IMR-90 (cell line): ENCODE measurements at regions of chr5 and their contacts with region 1.

Region 1: DNA sequence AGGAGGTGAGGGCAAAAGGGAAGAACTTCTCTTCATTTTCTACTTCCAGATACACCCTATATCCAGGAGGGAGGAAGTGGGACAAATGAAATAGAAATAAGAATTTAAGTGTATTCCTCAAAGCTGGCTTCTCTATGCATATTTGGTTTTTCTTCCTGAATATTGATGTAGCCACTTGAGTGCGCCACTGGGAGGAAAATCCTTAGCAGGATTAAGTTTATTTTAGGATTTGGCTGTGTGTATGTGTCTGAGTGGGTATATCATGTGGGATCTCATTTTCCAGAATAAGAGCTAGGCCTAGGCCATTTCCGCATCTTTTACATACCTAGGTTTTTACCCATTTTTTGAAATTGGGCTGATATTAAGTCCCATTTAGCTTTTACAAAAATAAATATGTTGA is 42.5 kb downstream of the MAP1B start:
- DNase-seq: no peak
- ATAC-seq: no peak; the same call in 1 of the 2 replicates
- H3K4me3 ChIP-seq: no peak overlapping the region
- H3K27ac ChIP-seq: no peak overlapping the region
- H3K4me1 ChIP-seq: peaks cover 29% of the 10 kb centered on the region
- H3K27me3 ChIP-seq: no peaks in the 10 kb centered on the region
- CTCF ChIP-seq: peak; percentile 29; the same call in 1 of the 2 replicates
- POLR2A ChIP-seq: no peak
- RAD21 ChIP-seq: peak; percentile 33; the same call in 1 of the 2 replicates

Region 2: DNA sequence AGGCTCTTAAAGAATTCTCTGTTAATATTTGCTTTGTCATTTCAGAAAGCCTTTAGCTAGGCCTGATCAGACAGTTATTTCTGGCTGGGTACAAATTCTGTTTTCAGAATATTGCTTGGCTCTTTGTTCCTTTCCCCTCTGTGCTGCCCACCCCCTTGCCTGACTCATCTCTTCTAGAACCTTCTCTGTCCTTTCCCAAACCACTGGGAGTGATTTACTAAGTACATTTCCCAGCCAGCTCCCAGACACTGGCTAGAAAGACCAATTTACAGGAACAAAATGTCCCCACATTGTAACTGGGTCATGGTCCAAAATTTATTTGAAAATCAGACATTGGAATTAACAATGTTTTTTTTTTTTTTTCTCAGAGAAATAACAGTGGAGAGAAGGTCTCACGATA is 175.6 kb before region 1 on chr5:
- CTCF ChIA-PET with region 1: no interaction called
- POLR2A ChIA-PET with region 1: no interaction called
- dilution Hi-C with region 1: no loop called
- in situ Hi-C with region 1: no loop called
- intact Hi-C with region 1: no loop called
- DNase-seq: no peak
- ATAC-seq: no peak
- H3K4me3 ChIP-seq: no peak overlapping the region
- H3K27ac ChIP-seq: no peak overlapping the region
- H3K4me1 ChIP-seq: no peaks in the 10 kb centered on the region
- H3K27me3 ChIP-seq: peaks cover 26% of the 10 kb centered on the region
- CTCF ChIP-seq: no peak
- POLR2A ChIP-seq: no peak
- RAD21 ChIP-seq: no peak

Region 3: GRCh38 chr5:72228960-72229359 is 79.2 kb after region 1 on chr5:
- CTCF ChIA-PET with region 1: no interaction called
- POLR2A ChIA-PET with region 1: no interaction called
- dilution Hi-C with region 1: no loop called
- in situ Hi-C with region 1: no loop called
- intact Hi-C with region 1: no loop called
- DNase-seq: no peak
- ATAC-seq: no peak
- H3K4me3 ChIP-seq: no peak overlapping the region
- H3K27ac ChIP-seq: no peak overlapping the region
- H3K4me1 ChIP-seq: peaks cover 4% of the 10 kb centered on the region
- H3K27me3 ChIP-seq: no peaks in the 10 kb centered on the region
- CTCF ChIP-seq: no peak
- POLR2A ChIP-seq: no peak
- RAD21 ChIP-seq: no peak

Region 4: GRCh38 chr5:72244862-72245371 is 95.2 kb after region 1 on chr5:
- CTCF ChIA-PET with region 1: interaction called, 3 read pairs
- POLR2A ChIA-PET with region 1: no interaction called
- dilution Hi-C with region 1: no loop called
- in situ Hi-C with region 1: no loop called
- intact Hi-C with region 1: loop called (anchors 5 kb)
- DNase-seq: peak; percentile 61
- ATAC-seq: peak; percentile 77
- H3K4me3 ChIP-seq: no peak overlapping the region
- H3K27ac ChIP-seq: no peak overlapping the region
- H3K4me1 ChIP-seq: peaks cover 14% of the 10 kb centered on the region; the same call in 1 of the 2 replicates
- H3K27me3 ChIP-seq: no peaks in the 10 kb centered on the region
- CTCF ChIP-seq: peak; percentile 47
- POLR2A ChIP-seq: no peak
- RAD21 ChIP-seq: peak; percentile 54